ENCODE measurements at regions of chr13 and their contacts with region 1.

Region 1: GRCh38 chr13:100625456-100625855 is 36.9 kb upstream of the GGACT start:
- DNase-seq: no peak
- H3K4me3 ChIP-seq: peak overlapping the region in 1 of 59 donors; percentile 7
- H3K27ac ChIP-seq: peak overlapping the region in 20 of 59 donors; percentile 2 to 59 (median 20)
- H3K27me3 ChIP-seq: no peaks in the 10 kb centered on the region
- CTCF ChIP-seq: no peak

Region 2: GRCh38 chr13:99626461-99627082 is 998.9 kb before region 1 on chr13:
- intact Hi-C with region 1: no loop called
- DNase-seq: no peak
- H3K4me3 ChIP-seq: no peak overlapping the region
- H3K27ac ChIP-seq: no peak overlapping the region
- H3K27me3 ChIP-seq: no peaks in the 10 kb centered on the region
- CTCF ChIP-seq: no peak

Region 3: GRCh38 chr13:100573121-100573520 is 52.3 kb before region 1 on chr13:
- intact Hi-C with region 1: loop called in 1 of 2 experiments (anchors 5 kb)
- DNase-seq: peak in 9 of 10 donors; percentile 45 to 84 (median 65)
- H3K4me3 ChIP-seq: no peak overlapping the region
- H3K27ac ChIP-seq: no peak overlapping the region
- H3K27me3 ChIP-seq: no peaks in the 10 kb centered on the region
- CTCF ChIP-seq: peak; percentile 35 to 92 (median 78)

Region 4: GRCh38 chr13:101007245-101007644 is 381.8 kb after region 1 on chr13:
- intact Hi-C with region 1: no loop called
- DNase-seq: no peak
- H3K4me3 ChIP-seq: no peak overlapping the region
- H3K27ac ChIP-seq: no peak overlapping the region
- H3K27me3 ChIP-seq: peaks cover 0 to 2% (median 0%) of the 10 kb centered on the region in 45 donors
- CTCF ChIP-seq: no peak

Region 5: DNA sequence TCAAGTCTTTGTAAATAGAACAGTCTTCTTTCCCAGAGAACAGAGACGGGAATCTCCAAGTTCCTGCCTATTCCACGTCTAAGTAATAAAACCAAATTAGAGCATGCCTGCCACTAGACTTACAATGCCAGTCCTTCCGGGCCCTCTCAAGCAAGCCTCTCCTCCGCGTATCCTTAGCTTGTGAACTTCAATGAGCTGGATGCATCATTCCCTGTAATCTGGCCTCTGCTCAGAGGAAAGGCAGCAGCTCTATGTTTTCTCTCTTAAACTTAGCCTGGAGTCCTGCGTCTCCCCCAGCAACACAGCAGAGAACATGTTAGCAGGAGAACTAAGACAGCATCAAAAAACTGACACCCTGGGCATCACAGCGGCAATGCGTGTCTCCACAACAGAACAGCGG is 782.7 kb after region 1 on chr13:
- intact Hi-C with region 1: no loop called
- DNase-seq: no peak
- H3K4me3 ChIP-seq: peak overlapping the region in 2 of 59 donors; percentile 6 to 9
- H3K27ac ChIP-seq: peak overlapping the region in 29 of 59 donors; percentile 1 to 52 (median 20)
- H3K27me3 ChIP-seq: no peaks in the 10 kb centered on the region
- CTCF ChIP-seq: no peak